GM12878 (cell line): ENCODE measurements at regions of chr4 and their contacts with region 1.

Region 1: GRCh38 chr4:47933840-47934239 is 19.5 kb upstream of the NFXL1 start:
- DNase-seq: no peak
- ATAC-seq: peak; percentile 77
- H3K4me3 ChIP-seq: no peak overlapping the region
- H3K27ac ChIP-seq: no peak overlapping the region
- H3K4me1 ChIP-seq: no peaks in the 10 kb centered on the region
- H3K27me3 ChIP-seq: no peaks in the 10 kb centered on the region
- CTCF ChIP-seq: peak; percentile 44 to 70 (median 64); a peak in 5 of 6 replicates
- EP300 ChIP-seq: no peak
- POLR2A ChIP-seq: no peak
- RAD21 ChIP-seq: peak; percentile 80

Region 2: DNA sequence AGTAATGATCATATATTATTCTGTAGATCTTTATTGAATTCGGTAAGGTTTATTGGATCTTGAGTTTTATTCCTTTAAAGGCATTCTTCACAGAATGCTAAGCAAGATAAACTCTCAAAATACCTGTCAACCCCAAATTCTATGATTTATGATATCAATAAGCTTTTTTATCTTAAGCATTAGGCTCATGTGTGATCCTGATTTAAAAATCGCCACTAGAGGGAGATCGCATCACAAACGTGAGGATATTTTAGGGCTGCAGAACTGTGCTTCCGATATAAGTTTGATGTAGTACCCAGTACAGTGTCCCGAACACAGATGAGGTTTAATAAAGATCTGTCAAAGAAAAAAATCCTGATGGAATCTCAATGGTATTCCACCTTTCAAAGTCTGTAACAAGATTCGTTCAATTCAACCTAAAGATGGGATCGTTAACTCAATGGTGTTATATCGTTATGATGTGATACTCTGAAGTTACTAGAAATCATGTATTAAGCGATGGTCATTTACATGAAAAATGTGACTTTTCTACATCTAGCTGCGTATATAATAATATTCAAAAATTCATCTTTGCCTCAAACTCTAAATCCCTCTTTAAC is 264.9 kb before region 1 on chr4:
- CTCF ChIA-PET with region 1: interaction called, 20 read pairs
- POLR2A ChIA-PET with region 1: interaction called, 4 read pairs
- RAD21 ChIA-PET with region 1: interaction called, 6 read pairs
- SMC1A ChIA-PET with region 1: interaction called, 3 read pairs
- in situ Hi-C with region 1: no loop called
- intact Hi-C with region 1: loop called (anchors 5 kb)
- DNase-seq: no peak
- ATAC-seq: peak; percentile 90
- H3K4me3 ChIP-seq: no peak overlapping the region
- H3K27ac ChIP-seq: no peak overlapping the region
- H3K4me1 ChIP-seq: no peaks in the 10 kb centered on the region
- H3K27me3 ChIP-seq: no peaks in the 10 kb centered on the region; a peak in 1 of 4 replicates
- CTCF ChIP-seq: peak; percentile 62 to 78 (median 63); a peak in 5 of 6 replicates
- EP300 ChIP-seq: no peak
- POLR2A ChIP-seq: no peak
- RAD21 ChIP-seq: peak; percentile 64

Region 3: GRCh38 chr4:47686294-47686872 is 247.5 kb before region 1 on chr4:
- CTCF ChIA-PET with region 1: interaction called, 82 read pairs
- POLR2A ChIA-PET with region 1: no interaction called
- RAD21 ChIA-PET with region 1: interaction called, 7 read pairs
- SMC1A ChIA-PET with region 1: interaction called, 13 read pairs
- in situ Hi-C with region 1: loop called (anchors 5 kb)
- intact Hi-C with region 1: loop called (anchors 5 kb)
- DNase-seq: peak; percentile 13
- ATAC-seq: peak; percentile 92
- H3K4me3 ChIP-seq: no peak overlapping the region
- H3K27ac ChIP-seq: no peak overlapping the region
- H3K4me1 ChIP-seq: no peaks in the 10 kb centered on the region
- H3K27me3 ChIP-seq: no peaks in the 10 kb centered on the region
- CTCF ChIP-seq: peak; percentile 76 to 84 (median 79)
- EP300 ChIP-seq: no peak
- POLR2A ChIP-seq: no peak
- RAD21 ChIP-seq: peak; percentile 74

Region 4: DNA sequence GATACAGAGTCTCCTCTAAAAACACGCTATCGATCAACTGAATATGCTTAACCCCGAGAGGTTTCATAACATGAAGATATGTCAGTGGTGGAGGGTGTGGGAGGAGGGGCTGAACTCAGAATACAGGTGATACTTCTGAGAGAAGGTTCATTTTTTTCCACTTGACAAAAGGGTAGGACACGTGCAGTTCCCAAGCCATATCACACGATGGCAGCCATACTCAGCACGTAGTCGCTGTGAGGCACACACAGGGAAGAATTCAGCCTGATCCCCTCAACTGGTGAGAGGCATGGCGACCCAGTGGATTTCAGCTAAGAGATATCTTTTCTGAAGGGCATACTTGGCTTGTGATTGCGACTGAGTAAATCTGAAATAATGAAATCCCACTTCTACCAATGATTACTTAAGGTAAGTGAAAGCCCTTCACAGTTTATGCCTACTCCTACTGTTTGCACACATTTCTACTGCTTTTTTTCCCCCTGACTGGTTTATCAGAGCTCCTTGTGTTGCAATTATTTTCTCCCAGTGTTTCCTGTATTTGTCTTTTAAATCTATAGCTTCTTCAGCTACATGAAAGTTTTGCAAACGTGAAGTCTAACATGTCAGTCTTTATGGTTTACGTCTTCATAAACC is 229.0 kb before region 1 on chr4:
- CTCF ChIA-PET with region 1: interaction called, 14 read pairs
- POLR2A ChIA-PET with region 1: no interaction called
- RAD21 ChIA-PET with region 1: interaction called, 8 read pairs
- SMC1A ChIA-PET with region 1: interaction called, 16 read pairs
- in situ Hi-C with region 1: no loop called
- intact Hi-C with region 1: loop called (anchors 2 kb)
- DNase-seq: no peak
- ATAC-seq: peak; percentile 89
- H3K4me3 ChIP-seq: no peak overlapping the region
- H3K27ac ChIP-seq: no peak overlapping the region
- H3K4me1 ChIP-seq: no peaks in the 10 kb centered on the region
- H3K27me3 ChIP-seq: peaks cover 0 to 3% of the 10 kb centered on the region in 2 experiments; a peak in 2 of 4 replicates
- CTCF ChIP-seq: peak; percentile 44 to 51 (median 49); a peak in 4 of 6 replicates
- EP300 ChIP-seq: no peak
- POLR2A ChIP-seq: no peak
- RAD21 ChIP-seq: peak; percentile 65

Region 5: DNA sequence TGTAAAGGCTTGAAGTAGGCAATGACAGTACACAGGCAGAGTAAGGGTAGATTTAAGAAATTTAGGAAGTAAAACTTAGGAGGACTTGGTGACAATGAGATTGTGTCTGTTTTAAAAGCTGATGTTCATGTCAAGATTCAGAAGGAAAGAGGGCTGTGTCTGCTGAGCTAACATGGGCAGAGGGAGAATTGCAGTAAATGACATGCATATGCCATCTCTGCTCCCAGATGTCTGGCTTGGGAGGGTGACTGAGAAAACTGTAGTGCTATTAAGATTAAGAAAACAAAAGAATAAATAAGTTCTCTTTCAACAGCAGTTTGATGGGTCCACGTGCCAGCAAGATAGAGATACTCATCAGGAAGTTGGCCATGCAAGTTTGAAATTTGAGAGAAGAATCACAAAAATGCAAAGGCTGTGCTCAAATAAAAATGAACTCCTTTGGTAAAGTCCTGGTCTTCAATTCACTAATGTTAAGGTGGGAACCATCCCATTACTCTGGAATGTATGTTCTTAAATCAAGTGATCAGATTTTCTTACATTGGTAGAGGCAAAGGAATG is 26.7 kb before region 1 on chr4:
- CTCF ChIA-PET with region 1: interaction called, 10 read pairs
- POLR2A ChIA-PET with region 1: no interaction called
- RAD21 ChIA-PET with region 1: no interaction called
- SMC1A ChIA-PET with region 1: interaction called, 5 read pairs
- in situ Hi-C with region 1: no loop called
- intact Hi-C with region 1: no loop called
- DNase-seq: no peak
- ATAC-seq: peak; percentile 42
- H3K4me3 ChIP-seq: no peak overlapping the region
- H3K27ac ChIP-seq: no peak overlapping the region
- H3K4me1 ChIP-seq: no peaks in the 10 kb centered on the region
- H3K27me3 ChIP-seq: no peaks in the 10 kb centered on the region
- CTCF ChIP-seq: no peak
- EP300 ChIP-seq: no peak
- POLR2A ChIP-seq: no peak
- RAD21 ChIP-seq: no peak

Region 6: DNA sequence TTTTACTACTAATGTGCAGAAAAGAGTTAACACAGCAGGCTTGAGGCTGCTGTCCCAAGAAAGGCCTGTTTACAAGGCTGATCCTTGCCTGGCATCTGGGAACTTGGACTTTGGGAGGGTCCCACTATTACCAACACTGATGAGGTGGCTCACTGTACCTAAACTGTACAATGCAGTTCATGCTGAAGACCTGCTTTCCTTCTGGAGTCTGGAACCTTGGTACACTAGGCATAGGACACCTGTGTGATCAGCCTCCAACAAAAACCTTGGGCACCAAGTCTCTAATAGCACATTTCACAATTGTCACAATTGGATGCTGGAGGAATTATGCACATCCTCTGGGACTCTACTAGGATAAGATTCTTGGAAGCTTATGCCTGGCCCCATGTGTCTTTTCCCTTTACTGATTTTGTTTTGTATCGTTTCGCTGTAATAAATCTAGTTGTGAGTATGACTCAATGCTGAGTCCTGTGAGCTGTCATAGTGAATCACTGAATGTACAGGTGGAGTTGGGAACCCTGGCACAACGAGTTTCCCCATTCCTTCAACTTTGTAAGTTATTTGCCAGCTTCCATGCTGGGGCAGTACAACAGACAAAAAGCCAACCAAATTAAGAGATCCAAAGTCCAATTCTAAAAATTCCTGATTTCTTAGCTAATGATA is 289.9 kb after region 1 on chr4:
- CTCF ChIA-PET with region 1: no interaction called
- POLR2A ChIA-PET with region 1: no interaction called
- RAD21 ChIA-PET with region 1: no interaction called
- SMC1A ChIA-PET with region 1: no interaction called
- in situ Hi-C with region 1: no loop called
- intact Hi-C with region 1: no loop called
- DNase-seq: no peak
- ATAC-seq: no peak
- H3K4me3 ChIP-seq: no peak overlapping the region
- H3K27ac ChIP-seq: no peak overlapping the region
- H3K4me1 ChIP-seq: peaks cover 3% of the 10 kb centered on the region; the same call in 1 of the 2 replicates
- H3K27me3 ChIP-seq: no peaks in the 10 kb centered on the region
- CTCF ChIP-seq: no peak
- EP300 ChIP-seq: no peak
- POLR2A ChIP-seq: no peak
- RAD21 ChIP-seq: no peak